Psoas muscle (tissue), 8 donors: ENCODE measurements at regions of chr2 and their contacts with region 1.

Region 1: DNA sequence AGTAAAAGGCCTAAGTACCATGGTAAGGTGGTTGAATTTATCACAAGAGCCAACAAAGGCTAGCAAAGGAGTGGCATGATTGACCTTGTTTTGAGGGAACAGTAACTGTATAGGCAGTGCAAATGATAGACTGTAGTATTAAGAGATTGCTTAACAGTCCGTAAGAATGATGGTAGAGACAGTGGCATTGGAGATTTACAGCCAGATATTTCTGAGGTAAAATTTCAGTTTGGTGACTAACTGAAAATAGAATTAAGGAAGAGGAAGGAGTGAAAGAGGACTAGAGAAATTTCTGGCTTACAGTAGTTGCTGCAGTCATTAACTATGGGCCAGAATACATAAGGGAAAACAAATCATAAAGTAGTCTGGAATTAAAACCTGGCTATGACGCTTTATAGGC is 4.4 kb upstream of the BAZ2B start:
- DNase-seq: no peak
- ATAC-seq: no peak
- H3K4me3 ChIP-seq: no peak overlapping the region
- H3K27ac ChIP-seq: no peak overlapping the region
- H3K4me1 ChIP-seq: peaks cover 17% of the 10 kb centered on the region
- H3K27me3 ChIP-seq: no peaks in the 10 kb centered on the region
- CTCF ChIP-seq: no peak

Region 2: DNA sequence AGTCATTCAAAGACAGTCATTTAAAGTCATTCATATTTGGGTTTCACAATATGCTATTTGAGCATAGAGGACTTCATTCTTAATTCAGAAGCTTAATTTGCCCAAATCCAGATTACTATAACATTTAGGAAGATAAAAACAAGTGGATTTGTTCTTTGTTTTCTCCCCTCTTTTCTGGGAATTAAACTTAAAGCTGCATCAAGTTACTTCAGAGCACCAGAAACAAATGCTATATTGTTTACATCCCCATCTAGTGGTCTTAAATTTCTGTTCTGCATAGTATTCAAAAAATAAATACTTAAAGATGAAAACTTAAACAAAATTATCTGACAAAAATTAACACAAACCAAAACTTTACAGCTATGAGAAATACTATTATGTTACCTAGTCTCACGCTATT is 56.9 kb after region 1 on chr2:
- intact Hi-C with region 1: loop called in 1 of 2 experiments (anchors 10 kb)
- DNase-seq: no peak
- ATAC-seq: no peak
- H3K4me3 ChIP-seq: no peak overlapping the region
- H3K27ac ChIP-seq: no peak overlapping the region
- H3K4me1 ChIP-seq: no peaks in the 10 kb centered on the region
- H3K27me3 ChIP-seq: no peaks in the 10 kb centered on the region
- CTCF ChIP-seq: peak; percentile 36